CD4-positive, alpha-beta T cell (primary cell): ENCODE measurements at regions of chr19 and their contacts with region 1.

Region 1: GRCh38 chr19:23810496-23810895 is 51.8 kb upstream of the ZNF681 start:
- DNase-seq: no peak
- ATAC-seq: no peak
- H3K4me3 ChIP-seq: no peak overlapping the region
- H3K4me3 Mint-ChIP-seq: no peak overlapping the region
- H3K27ac ChIP-seq: no peak overlapping the region
- H3K27ac Mint-ChIP-seq: no peak overlapping the region
- H3K4me1 ChIP-seq: no peaks in the 10 kb centered on the region
- H3K4me1 Mint-ChIP-seq: no peaks in the 10 kb centered on the region
- H3K27me3 ChIP-seq: no peaks in the 10 kb centered on the region
- H3K27me3 Mint-ChIP-seq: no peaks in the 10 kb centered on the region
- CTCF ChIP-seq: no peak

Region 2: DNA sequence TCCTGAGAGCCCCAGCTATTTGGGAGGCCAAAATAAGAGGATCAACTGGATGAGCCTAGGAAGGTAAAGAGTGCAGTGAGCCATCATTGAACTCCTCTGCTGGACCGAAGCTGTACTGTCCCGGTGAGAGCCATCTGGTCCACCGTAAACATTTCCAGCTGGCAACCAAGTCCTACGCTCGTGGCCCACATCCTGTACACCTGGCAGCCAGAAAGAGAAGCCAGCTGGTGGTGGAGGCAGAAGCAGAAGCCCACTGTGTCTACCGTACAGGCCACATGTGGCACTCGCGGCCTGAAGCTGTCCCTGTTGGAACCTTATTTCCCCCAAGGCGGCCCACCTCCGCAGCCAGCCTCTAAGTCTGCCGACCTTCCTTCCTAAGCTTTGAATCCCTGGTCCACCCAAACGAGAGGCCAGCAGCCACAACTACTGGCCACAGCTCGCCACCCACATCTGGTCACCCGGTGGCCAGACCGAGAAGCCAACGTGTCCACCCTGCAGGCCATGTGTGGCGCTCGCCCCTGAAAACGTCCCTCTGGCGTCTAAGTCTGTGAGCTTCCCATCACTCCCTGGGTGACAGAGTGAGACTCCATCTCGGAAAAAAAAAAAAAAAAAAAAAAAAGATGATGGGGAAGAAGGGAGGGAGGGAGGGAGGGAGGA is 401.0 kb before region 1 on chr19:
- CTCF ChIA-PET with region 1: no interaction called
- POLR2A ChIA-PET with region 1: no interaction called
- intact Hi-C with region 1: loop called in 1 of 2 experiments (anchors 5 kb)
- DNase-seq: no peak
- ATAC-seq: no peak
- H3K4me3 ChIP-seq: no peak overlapping the region
- H3K4me3 Mint-ChIP-seq: no peak overlapping the region
- H3K27ac ChIP-seq: no peak overlapping the region
- H3K27ac Mint-ChIP-seq: no peak overlapping the region
- H3K4me1 ChIP-seq: no peaks in the 10 kb centered on the region
- H3K4me1 Mint-ChIP-seq: no peaks in the 10 kb centered on the region
- H3K27me3 ChIP-seq: peaks cover 0 to 4% of the 10 kb centered on the region in 2 experiments
- H3K27me3 Mint-ChIP-seq: peaks cover 7% of the 10 kb centered on the region
- CTCF ChIP-seq: no peak

Region 3: GRCh38 chr19:23436318-23436717 is 374.2 kb before region 1 on chr19:
- CTCF ChIA-PET with region 1: no interaction called
- POLR2A ChIA-PET with region 1: no interaction called
- intact Hi-C with region 1: no loop called
- DNase-seq: no peak
- ATAC-seq: no peak
- H3K4me3 ChIP-seq: no peak overlapping the region
- H3K4me3 Mint-ChIP-seq: no peak overlapping the region
- H3K27ac ChIP-seq: no peak overlapping the region
- H3K27ac Mint-ChIP-seq: no peak overlapping the region
- H3K4me1 ChIP-seq: no peaks in the 10 kb centered on the region
- H3K4me1 Mint-ChIP-seq: no peaks in the 10 kb centered on the region
- H3K27me3 ChIP-seq: no peaks in the 10 kb centered on the region
- H3K27me3 Mint-ChIP-seq: no peaks in the 10 kb centered on the region
- CTCF ChIP-seq: no peak